B cell (primary cell): ENCODE measurements at regions of chr4 and their contacts with region 1.

Region 1: DNA sequence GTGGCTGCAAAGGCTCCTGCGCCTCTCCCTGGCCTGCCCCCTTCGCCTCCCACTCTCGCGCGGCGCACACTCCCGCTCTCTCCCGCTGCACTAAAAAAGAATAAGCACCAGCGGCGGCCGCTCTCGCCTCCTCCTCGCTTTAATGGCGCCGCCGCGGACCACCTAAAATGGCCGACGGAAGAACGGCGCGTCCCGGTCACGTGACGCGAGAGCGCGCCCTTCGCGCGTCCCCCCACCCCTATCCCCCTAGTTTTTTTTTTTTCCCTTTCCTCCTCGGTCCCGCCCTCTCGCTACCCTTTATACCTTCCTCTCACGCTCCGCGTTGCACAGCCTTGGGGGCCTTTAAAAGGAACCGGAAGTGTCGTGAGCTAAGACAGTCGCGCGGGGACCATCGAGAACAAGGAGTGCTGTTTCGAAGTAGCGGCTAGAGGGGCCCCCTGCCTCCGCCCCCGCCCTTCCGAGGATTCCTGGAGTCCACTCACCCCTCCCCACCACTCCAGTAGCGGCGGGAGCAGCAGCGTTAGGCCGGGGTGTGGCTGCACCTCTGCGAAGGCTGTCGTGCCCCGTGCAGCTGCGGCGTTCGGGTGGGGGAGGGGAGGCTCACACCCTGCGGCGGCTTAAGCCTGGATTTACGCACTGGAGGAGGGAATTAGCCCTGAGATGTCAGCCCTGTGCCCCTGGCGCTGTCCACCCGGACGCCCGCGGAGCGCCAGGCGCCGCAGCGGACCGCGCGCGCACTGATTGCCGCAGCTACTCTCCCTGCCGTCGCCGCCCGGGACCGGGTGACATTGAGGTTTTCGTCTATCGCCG is at the start of gene HNRNPD:
- DNase-seq: peak; percentile 98
- ATAC-seq: peak; percentile 86
- H3K4me3 ChIP-seq: peak within 1 kb of the TSS; percentile 89 to 98 (median 95)
- H3K4me3 Mint-ChIP-seq: peak within 1 kb of the TSS; percentile 93
- H3K27ac ChIP-seq: peak within 1 kb of the TSS; percentile 98
- H3K27ac Mint-ChIP-seq: peak within 1 kb of the TSS; percentile 98
- H3K4me1 ChIP-seq: peaks cover 38% of the 10 kb centered on the region in 2 donors
- H3K4me1 Mint-ChIP-seq: peaks cover 51% of the 10 kb centered on the region
- H3K27me3 ChIP-seq: no peaks in the 10 kb centered on the region
- H3K27me3 Mint-ChIP-seq: no peaks in the 10 kb centered on the region
- CTCF ChIP-seq: no peak
- total RNA-seq, gene HNRNPD: 266 and 280 TPM in 2 replicates

Region 2: DNA sequence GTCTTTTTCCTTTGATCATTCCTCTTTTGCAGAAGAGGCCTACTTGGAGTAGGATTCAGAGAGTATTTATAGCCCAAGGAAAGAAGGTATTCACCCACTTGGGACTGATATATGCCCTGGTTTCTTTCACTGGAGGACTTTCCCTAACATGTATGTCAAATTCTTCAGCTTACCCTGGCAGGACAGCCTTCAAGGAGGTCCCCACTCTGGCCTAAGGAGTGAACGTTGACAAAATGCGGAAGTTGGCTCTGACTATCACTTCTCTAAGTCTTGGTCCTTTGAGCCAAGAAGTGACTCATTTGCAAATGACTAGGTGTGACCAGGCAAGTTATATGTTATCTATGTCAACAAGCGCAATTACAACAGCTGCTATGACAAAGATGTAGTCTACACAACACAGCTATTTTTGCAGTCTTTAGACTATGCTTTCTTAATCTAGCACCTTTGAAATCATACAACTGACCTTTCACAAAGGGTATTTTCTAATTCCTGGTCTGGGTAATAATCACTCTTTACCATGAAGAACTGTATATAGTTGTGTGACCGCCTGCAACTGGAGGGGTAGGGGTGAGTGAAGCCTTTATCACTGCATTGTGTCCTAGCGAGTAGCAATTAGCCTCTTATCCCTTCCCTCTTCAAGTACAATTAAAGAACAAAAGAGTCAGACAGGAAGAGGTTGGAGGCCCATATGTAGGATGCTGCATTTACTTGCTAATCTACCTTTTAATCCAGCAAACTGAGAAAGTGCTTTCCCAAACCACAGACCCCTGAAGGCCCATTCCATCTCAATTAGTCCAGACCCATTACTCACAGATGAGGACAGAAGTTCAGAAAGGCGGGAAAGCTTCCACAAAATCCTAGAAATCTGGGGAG is 952.4 kb before region 1 on chr4:
- CTCF ChIA-PET with region 1: no interaction called
- POLR2A ChIA-PET with region 1: no interaction called
- intact Hi-C with region 1: loop called (anchors 5 kb)
- DNase-seq: peak; percentile 83
- ATAC-seq: peak; percentile 98
- H3K4me3 ChIP-seq: no peak overlapping the region
- H3K4me3 Mint-ChIP-seq: peak overlapping the region; percentile 59
- H3K27ac ChIP-seq: peak overlapping the region; percentile 51 to 73
- H3K27ac Mint-ChIP-seq: peak overlapping the region; percentile 95
- H3K4me1 ChIP-seq: peaks cover 12 to 24% of the 10 kb centered on the region in 2 donors
- H3K4me1 Mint-ChIP-seq: peaks cover 42% of the 10 kb centered on the region
- H3K27me3 ChIP-seq: no peaks in the 10 kb centered on the region
- H3K27me3 Mint-ChIP-seq: no peaks in the 10 kb centered on the region
- CTCF ChIP-seq: no peak

Region 3: GRCh38 chr4:82428969-82429727 is 55.1 kb after region 1 on chr4:
- CTCF ChIA-PET with region 1: interaction called, 14 read pairs
- POLR2A ChIA-PET with region 1: interaction called, 44 read pairs
- intact Hi-C with region 1: loop called (anchors 1 kb)
- DNase-seq: peak; percentile 97
- ATAC-seq: peak; percentile 64
- H3K4me3 ChIP-seq: peak overlapping the region; percentile 98 to 99 (median 98)
- H3K4me3 Mint-ChIP-seq: peak overlapping the region; percentile 100
- H3K27ac ChIP-seq: peak overlapping the region; percentile 96 to 100
- H3K27ac Mint-ChIP-seq: peak overlapping the region; percentile 100
- H3K4me1 ChIP-seq: peaks cover 27 to 32% of the 10 kb centered on the region in 2 donors
- H3K4me1 Mint-ChIP-seq: peaks cover 48% of the 10 kb centered on the region
- H3K27me3 ChIP-seq: no peaks in the 10 kb centered on the region
- H3K27me3 Mint-ChIP-seq: no peaks in the 10 kb centered on the region
- CTCF ChIP-seq: peak; percentile 97

Region 4: DNA sequence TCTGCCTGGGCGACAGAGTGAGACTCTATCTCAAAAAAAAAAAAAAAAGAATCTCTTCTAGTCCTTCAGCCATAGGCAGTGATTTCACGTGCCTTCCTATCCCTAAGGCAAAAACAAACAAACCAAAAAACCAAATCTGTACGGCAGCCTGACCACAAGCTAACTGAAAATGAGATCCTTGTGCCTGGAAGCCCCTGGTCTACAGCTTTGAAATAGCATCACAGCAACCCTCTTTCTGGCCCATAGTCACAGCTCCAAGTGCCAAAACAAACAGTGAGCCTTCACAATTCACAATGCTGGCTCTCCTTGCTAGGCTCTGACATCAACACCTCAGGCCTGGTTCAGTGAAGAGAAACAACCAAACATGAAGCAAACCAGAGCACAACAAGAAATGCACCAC is 141.7 kb after region 1 on chr4:
- CTCF ChIA-PET with region 1: no interaction called
- POLR2A ChIA-PET with region 1: no interaction called
- intact Hi-C with region 1: no loop called
- DNase-seq: no peak
- ATAC-seq: no peak
- H3K4me3 ChIP-seq: no peak overlapping the region
- H3K4me3 Mint-ChIP-seq: no peak overlapping the region
- H3K27ac ChIP-seq: no peak overlapping the region
- H3K27ac Mint-ChIP-seq: no peak overlapping the region
- H3K4me1 ChIP-seq: no peaks in the 10 kb centered on the region
- H3K4me1 Mint-ChIP-seq: no peaks in the 10 kb centered on the region
- H3K27me3 ChIP-seq: peaks cover 0 to 12% (median 0%) of the 10 kb centered on the region in 4 experiments
- H3K27me3 Mint-ChIP-seq: peaks cover 27% of the 10 kb centered on the region
- CTCF ChIP-seq: no peak

Region 5: DNA sequence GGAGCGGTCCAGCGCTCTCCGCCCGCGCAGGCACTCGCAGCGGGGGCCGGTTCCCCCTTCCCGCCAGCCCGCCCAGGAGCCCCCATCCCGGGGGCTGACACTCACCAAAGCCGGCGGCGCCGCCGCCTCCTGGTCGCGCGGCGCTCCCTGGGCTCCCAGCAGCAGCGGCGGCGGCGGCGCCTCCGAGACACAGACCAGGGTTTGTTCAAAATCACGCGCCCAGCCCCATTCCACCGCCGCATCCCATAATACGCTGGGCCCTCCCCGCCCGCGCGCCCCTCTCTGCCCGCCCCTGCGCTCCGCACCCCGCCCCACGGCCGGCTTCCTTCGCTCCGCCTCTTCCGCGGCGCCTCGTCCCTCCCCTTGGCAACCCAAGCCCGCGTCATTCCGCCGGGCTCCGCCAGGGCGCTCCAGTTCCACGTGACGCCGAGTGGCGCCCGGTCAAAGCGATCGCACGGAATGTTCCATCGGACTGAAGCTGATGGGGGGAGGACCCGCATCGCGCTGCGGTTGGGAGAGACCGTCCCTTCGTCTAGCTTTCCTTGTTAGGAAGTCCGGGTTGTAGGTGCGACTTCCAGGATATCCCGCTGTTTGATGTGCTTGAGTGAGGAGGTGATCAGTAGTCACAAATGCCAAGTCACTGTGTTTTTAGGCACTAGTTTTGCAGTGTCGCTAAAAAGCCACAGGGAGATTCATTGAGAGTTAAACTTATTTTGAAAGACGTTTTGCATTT is 638.8 kb after region 1 on chr4:
- CTCF ChIA-PET with region 1: no interaction called
- POLR2A ChIA-PET with region 1: no interaction called
- intact Hi-C with region 1: loop called (anchors 1 kb)
- DNase-seq: peak; percentile 99
- ATAC-seq: peak; percentile 89
- H3K4me3 ChIP-seq: peak overlapping the region; percentile 56 to 87 (median 79)
- H3K4me3 Mint-ChIP-seq: peak overlapping the region; percentile 92
- H3K27ac ChIP-seq: peak overlapping the region; percentile 37 to 72
- H3K27ac Mint-ChIP-seq: peak overlapping the region; percentile 91
- H3K4me1 ChIP-seq: peaks cover 24 to 33% of the 10 kb centered on the region in 2 donors
- H3K4me1 Mint-ChIP-seq: peaks cover 43% of the 10 kb centered on the region
- H3K27me3 ChIP-seq: no peaks in the 10 kb centered on the region
- H3K27me3 Mint-ChIP-seq: no peaks in the 10 kb centered on the region
- CTCF ChIP-seq: peak; percentile 59

Region 6: GRCh38 chr4:83455281-83456129 is 1081.5 kb after region 1 on chr4 and contains the starts of genes HELQ and MRPS18C:
- CTCF ChIA-PET with region 1: no interaction called
- POLR2A ChIA-PET with region 1: no interaction called
- intact Hi-C with region 1: loop called (anchors 1 kb)
- DNase-seq: peak; percentile 99
- ATAC-seq: peak; percentile 91
- H3K4me3 ChIP-seq: peak within 1 kb of the TSS; percentile 83 to 96 (median 94)
- H3K4me3 Mint-ChIP-seq: peak within 1 kb of the TSS; percentile 100
- H3K27ac ChIP-seq: peak within 1 kb of the TSS; percentile 95 to 100
- H3K27ac Mint-ChIP-seq: peak within 1 kb of the TSS; percentile 100
- H3K4me1 ChIP-seq: peaks cover 18 to 22% of the 10 kb centered on the region in 2 donors
- H3K4me1 Mint-ChIP-seq: peaks cover 60% of the 10 kb centered on the region
- H3K27me3 ChIP-seq: no peaks in the 10 kb centered on the region
- H3K27me3 Mint-ChIP-seq: no peaks in the 10 kb centered on the region
- CTCF ChIP-seq: peak; percentile 19
- total RNA-seq, gene HELQ: 42.4 and 50.8 TPM in 2 replicates
- total RNA-seq, gene MRPS18C: 44.0 and 45.0 TPM in 2 replicates